ENCODE measurements at regions of chr6 and their contacts with region 1.

Region 1: DNA sequence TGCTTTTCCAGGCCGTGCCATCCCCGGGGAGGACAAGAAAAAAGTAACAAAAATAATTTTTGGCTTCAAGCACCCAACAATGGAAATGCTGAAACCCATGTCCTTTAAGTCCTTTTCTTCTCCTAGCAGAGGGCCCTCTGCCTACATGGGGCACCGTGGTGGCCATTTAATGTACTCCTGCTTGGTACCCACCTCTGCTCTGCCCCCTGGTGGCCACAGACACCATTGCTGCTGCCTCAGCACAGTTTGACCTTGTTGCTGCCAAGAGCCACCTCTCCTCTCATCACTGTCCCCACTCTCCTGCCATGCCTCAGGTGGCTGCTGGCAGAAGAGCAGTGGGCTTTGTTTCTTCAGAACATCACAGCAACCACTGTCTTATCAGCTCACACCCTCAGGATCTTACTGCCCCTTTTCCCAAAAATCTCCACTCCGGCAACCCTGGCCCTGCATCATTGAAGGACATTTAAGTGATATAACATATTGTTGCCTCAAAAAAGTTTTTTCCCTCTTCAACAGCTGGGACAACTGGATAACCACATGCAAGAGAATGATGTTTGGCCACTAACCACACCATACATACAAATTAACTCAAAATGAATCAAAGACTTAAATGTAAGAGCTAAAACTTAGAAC is 12.9 kb upstream of the ARMC2 start:
- DNase-seq: peak; percentile 73 to 98 (median 90)

Region 2: DNA sequence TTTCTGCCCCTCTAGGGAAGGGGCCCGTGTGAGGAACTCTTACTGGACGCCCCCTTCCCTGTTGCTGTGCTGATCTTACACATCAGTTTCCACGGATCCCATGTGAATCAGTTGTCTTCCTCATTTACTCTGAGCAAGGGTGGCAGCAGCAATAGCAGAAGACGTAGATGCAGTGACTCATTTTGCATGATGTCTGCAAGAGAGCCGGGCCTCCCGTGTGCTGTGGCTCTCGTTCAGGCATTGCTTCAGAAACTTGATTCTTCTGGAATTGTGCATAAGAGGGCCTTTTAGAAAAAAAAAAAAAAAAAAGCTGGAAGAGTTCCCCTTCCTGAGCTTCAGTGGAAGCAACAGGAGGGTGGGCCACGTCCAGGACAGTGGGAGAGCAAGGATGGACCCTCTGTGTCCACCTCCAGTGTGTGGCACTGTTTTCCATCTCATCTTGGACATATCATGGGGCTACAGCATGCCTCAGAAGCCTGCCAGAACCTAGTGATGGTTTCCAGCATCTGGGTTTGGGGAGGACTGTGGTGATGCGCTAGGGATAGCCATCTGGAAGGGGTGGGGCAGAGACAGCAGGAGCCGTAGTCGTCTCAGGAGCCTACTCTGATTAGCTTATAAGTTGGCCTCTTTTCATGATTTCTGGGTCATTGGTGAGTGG is 212.6 kb before region 1 on chr6:
- intact Hi-C with region 1: no loop called
- DNase-seq: peak in 6 of 10 donors; percentile 14 to 81 (median 50)

Region 3: DNA sequence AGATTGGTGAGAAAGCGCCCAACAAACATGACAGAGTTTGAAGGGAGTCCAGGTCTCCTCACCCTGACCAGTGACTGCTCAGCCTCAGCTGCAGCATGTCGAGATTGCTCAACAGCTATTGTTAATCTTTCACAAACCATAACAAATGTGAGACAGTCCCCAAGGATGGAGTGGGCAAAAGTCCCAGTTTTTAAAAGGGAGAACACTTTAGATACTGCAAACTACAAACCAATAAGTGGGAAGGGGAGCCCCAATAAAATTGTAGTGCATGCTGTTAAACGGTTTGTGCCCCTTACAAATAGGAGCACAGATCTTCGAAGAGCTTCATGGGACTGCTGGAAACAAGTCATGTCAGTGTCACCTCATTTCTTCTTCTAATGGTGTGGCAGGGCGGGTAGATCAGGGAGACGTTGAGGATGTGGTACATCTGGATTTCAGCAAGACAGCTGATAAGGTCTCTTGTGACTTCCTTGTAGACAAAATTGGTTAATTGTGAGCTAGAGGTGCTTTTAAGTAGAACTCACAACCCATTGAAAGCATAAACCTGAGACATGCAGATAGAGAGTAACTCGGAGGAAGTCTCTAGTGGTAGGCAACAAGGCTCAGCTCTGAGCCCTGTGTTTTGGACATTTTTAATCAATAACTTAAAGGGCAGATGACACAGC is 121.1 kb before region 1 on chr6:
- intact Hi-C with region 1: no loop called
- DNase-seq: no peak

Region 4: GRCh38 chr6:108800427-108800864 is 34.9 kb before region 1 on chr6:
- intact Hi-C with region 1: loop called (anchors 5 kb)
- DNase-seq: peak in 8 of 10 donors; percentile 36 to 92 (median 53)

Measured in posterior cingulate gyrus (tissue), 11 donors.